Vagina (tissue), 2 donors: ENCODE measurements at regions of chr4 and their contacts with region 1.

Region 1: DNA sequence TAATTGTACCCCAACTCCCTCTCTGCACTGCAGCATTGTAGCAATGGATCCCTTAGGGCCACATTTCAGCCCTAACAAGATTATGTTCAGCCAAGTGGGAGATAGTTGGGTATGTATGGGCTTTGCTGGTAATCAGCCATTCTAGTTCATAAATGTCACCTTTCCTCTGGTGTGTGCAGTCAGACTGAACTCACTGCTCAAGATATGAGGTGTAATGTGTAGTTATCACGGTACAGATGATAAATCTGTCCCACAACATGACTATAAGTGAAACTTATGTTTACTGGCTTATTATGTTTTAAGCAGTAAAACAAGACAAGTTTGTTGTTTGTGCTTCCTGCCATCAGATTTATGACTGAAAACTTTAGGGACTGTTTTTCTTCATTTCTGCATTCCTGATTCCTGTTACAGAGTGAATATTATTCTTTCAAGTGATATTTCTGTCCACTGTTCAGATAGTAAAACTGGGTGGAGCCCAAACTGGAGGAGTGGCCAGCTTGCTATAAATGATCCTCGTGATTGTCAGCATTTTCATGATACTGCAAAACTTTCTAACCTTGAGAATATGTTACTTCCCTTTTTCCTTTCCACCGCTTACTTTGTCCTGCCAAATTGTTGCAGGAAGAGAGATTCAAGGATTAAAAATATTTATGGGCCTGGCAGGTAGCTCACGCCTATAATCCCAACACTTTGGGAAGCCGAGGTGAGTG is 44.9 kb downstream of the ANAPC4 start:
- DNase-seq: no peak
- H3K4me3 ChIP-seq: no peak overlapping the region
- H3K27ac ChIP-seq: no peak overlapping the region
- H3K4me1 ChIP-seq: peaks cover 7% of the 10 kb centered on the region
- H3K27me3 ChIP-seq: no peaks in the 10 kb centered on the region
- CTCF ChIP-seq: no peak
- POLR2A ChIP-seq: no peak

Region 2: DNA sequence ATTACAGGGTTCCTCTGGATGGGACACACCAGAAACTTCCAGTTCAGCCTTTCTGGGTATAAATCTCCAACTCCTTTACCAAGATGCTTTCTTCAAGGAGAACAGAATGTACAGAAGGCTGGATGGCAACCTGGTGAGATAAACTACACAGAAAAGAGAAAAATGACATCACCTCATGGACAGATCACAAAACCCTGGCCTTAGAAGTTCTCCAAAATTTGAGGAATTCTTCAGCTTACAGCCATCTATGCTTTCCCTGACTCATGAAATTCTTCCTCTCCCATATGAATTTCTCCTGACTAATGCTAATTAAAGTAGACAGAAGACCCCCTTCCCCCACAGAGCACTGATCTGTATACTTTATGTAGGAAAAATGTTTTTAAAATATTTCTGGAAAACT is 1784.0 kb after region 1 on chr4:
- intact Hi-C with region 1: loop called (anchors 5 kb)
- DNase-seq: no peak
- H3K4me3 ChIP-seq: no peak overlapping the region
- H3K27ac ChIP-seq: no peak overlapping the region
- H3K4me1 ChIP-seq: no peaks in the 10 kb centered on the region
- H3K27me3 ChIP-seq: no peaks in the 10 kb centered on the region
- CTCF ChIP-seq: no peak
- POLR2A ChIP-seq: no peak